Sciatic nerve (tissue), 2 donors: ENCODE measurements at regions of chr9 and their contacts with region 1.

Region 1: GRCh38 chr9:126611592-126612325 is 2.0 kb upstream of the LMX1B start:
- DNase-seq: peak; percentile 84
- ATAC-seq: peak; percentile 85

Region 2: DNA sequence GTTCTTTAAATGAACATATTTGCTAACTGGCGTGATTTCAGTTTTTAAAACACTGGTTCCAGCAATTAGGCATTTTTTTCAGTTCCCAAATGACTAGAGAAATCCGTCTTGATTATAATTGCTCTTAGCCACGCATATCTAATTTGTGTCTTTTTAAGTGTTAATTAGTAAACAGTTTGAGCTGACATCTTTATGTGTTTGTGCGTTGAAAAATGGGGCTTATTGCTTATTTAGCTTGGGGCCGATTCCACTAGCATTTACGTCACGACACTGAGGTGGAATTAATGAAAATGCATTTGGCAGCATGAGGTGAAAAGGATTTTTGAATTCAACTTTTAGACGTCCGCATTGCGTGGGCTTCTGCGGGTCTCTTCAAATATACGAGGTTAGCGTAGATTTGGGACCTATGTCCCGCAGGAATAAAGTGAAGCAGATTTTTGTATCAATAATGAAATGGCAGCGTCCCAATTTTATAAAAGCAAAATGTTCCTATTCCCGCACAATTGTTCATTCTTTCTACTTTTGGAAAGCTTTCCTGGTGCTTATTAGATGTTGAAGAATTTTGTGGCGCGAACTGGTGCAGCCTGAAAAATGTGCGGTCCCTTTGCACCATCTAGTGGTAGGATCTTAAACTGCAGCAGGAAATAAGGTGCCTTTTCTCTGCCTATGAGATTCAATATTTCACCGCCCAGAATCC is 120.7 kb before region 1 on chr9:
- intact Hi-C with region 1: no loop called
- DNase-seq: no peak
- ATAC-seq: peak; percentile 69

Region 3: GRCh38 chr9:126781186-126782052 is 169.7 kb after region 1 on chr9:
- intact Hi-C with region 1: loop called (anchors 10 kb)
- DNase-seq: peak; percentile 88
- ATAC-seq: peak; percentile 85

Region 4: DNA sequence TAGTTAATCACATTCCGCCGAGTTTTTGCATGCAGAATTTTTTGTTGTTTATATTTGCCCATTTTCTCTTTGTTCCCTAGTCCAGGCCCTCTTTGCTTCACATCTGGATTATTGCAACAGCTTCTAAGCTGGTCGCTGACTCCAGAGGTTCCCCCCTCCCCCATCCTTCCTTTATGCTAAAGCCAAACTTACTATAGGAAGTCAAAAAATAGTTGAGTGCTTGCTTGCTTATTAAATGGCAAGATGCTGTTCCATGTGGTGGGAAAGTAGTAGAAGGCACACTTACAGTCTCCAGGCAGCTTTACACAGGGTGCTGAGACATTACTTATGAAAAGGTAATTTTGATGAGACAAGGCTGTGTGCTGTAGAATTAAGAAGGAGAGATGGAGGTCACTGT is 249.9 kb after region 1 on chr9:
- intact Hi-C with region 1: no loop called
- DNase-seq: no peak
- ATAC-seq: peak; percentile 13